Activated CD8-positive, alpha-beta T cell treated with anti-CD3 and anti-CD28 coated beads, Interleukin-2, amount 10 ng/mL, durations not matched to agents 7 days and 5 days (primary cell): ENCODE measurements at regions of chr5 and their contacts with region 1.

Region 1: DNA sequence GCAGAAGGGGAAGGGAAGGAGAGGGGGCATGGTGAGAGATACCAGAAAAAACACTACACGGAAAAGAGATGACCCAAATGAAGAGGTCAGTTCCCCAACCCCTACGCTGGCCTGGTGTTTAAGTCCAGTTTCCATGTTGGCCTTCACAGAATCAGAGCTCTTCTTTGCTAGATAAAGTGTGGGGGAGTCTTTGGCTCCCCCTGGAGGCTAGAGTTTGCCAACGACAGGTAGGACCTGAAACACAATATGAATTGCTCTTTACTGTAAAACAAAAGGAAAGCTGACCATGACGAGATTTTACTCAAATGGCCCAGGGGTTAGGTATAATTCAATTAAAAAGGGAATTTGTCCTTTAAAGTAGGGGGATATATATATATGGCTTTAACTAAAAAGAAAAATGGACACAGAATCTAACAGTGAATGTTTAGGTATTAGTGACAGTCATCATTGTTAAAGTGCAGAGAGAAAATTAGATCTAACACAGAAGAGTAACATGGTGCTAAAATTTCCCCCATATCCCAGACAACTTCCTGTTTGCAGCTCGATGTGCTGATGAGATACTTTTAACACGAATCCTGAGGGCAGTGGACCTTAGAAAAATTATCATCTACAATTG is 92.0 kb downstream of the SV2C start:
- DNase-seq: peak; percentile 74
- ATAC-seq: peak; percentile 68
- H3K4me3 Mint-ChIP-seq: no peak overlapping the region
- H3K27ac Mint-ChIP-seq: peak overlapping the region; percentile 84
- H3K4me1 Mint-ChIP-seq: peaks cover 22% of the 10 kb centered on the region
- H3K27me3 Mint-ChIP-seq: peaks cover 4% of the 10 kb centered on the region

Region 2: DNA sequence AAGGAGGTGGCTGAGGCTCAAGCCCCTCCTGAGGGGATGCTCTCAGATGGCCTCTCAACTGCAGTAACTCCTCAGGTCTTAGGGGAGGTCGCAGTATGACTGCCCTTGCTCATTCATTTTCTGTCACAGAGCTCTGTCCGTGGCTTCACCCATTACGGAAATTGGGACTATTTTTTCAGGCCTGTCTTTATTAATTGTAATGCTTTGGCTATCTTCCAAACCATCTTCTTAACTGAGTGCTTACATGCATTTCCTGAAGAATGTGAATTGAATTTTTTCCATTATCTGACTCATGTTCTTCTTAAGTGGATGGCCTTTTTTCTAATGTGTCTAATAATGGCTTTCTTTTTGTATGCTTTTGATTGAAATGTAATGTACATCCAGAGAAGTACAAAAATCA is 128.4 kb before region 1 on chr5:
- CTCF ChIA-PET with region 1: no interaction called
- POLR2A ChIA-PET with region 1: no interaction called
- DNase-seq: no peak
- ATAC-seq: no peak
- H3K4me3 Mint-ChIP-seq: no peak overlapping the region
- H3K27ac Mint-ChIP-seq: no peak overlapping the region
- H3K4me1 Mint-ChIP-seq: no peaks in the 10 kb centered on the region
- H3K27me3 Mint-ChIP-seq: peaks cover 6% of the 10 kb centered on the region

Region 3: DNA sequence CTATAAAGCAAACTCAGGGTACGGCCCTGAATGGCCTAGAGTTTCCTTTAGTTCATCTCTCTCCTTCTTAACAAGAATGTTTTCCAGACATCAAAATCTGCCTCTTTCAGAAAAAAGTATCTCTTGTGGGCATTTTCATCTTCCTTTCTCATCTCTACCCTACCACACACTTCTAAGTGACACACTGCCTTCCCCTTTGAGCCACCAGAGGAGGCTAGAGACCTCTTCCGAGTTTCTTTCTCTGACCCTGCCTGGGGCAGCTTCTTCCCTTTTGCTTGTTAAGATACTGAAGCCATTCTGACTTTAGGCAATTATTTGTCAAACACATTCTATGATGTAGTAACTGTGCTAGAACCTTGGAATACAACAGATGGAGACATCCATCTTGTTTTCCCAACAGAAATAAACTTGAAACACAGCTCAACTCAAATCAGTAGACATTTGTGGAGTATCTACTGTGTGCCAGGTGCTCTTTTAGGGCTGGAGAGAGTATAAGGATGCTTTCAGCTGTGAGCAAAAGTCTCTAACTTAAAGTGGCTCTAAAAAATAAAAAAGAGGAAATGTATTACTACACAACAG is 100.6 kb before region 1 on chr5:
- CTCF ChIA-PET with region 1: interaction called, 22 read pairs
- POLR2A ChIA-PET with region 1: no interaction called
- DNase-seq: peak; percentile 44
- ATAC-seq: peak; percentile 53
- H3K4me3 Mint-ChIP-seq: no peak overlapping the region
- H3K27ac Mint-ChIP-seq: no peak overlapping the region
- H3K4me1 Mint-ChIP-seq: peaks cover 5% of the 10 kb centered on the region
- H3K27me3 Mint-ChIP-seq: peaks cover 51% of the 10 kb centered on the region

Region 4: DNA sequence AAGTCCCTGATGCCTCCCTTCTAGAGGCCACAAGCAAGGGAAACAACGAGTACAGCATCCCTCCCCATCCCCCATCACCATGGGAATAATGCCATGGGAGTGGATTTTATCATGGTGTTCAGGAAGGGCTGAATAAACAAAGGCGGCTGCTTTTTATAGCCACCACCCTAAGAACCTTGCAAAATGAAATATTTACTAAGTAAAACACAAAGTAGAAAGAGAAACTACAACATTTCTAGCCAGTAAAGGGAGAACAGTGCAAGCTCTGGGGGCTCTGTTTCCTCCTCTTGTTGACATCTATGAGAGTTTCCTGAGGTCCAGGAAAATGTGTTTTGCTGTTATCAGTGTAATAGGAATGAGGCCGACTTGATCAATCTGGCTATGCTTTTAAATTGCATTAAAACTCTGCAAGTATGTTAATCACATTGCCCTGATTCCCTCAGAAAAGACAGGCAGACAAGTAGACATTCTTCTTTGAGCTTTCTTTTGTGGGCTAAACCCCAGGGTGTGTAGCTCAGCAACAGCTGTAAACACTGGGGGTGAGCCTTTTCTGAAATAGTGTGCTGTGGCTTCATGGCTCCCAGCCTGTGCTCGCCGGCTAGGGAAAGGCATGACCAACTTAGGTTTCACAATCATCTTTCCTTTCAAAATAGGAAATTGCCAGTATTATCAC is 60.8 kb before region 1 on chr5:
- CTCF ChIA-PET with region 1: no interaction called
- POLR2A ChIA-PET with region 1: no interaction called
- DNase-seq: no peak
- ATAC-seq: no peak
- H3K4me3 Mint-ChIP-seq: no peak overlapping the region
- H3K27ac Mint-ChIP-seq: no peak overlapping the region
- H3K4me1 Mint-ChIP-seq: peaks cover 2% of the 10 kb centered on the region
- H3K27me3 Mint-ChIP-seq: peaks cover 20% of the 10 kb centered on the region

Region 5: GRCh38 chr5:76145945-76146344 is 29.2 kb before region 1 on chr5:
- CTCF ChIA-PET with region 1: interaction called, 22 read pairs
- POLR2A ChIA-PET with region 1: no interaction called
- DNase-seq: peak; percentile 25
- ATAC-seq: no peak
- H3K4me3 Mint-ChIP-seq: no peak overlapping the region
- H3K27ac Mint-ChIP-seq: no peak overlapping the region
- H3K4me1 Mint-ChIP-seq: no peaks in the 10 kb centered on the region
- H3K27me3 Mint-ChIP-seq: peaks cover 3% of the 10 kb centered on the region

Region 6: GRCh38 chr5:76187386-76187785 is 12.2 kb after region 1 on chr5:
- CTCF ChIA-PET with region 1: interaction called, 21 read pairs
- POLR2A ChIA-PET with region 1: no interaction called
- DNase-seq: no peak
- ATAC-seq: no peak
- H3K4me3 Mint-ChIP-seq: no peak overlapping the region
- H3K27ac Mint-ChIP-seq: no peak overlapping the region
- H3K4me1 Mint-ChIP-seq: peaks cover 3% of the 10 kb centered on the region
- H3K27me3 Mint-ChIP-seq: peaks cover 7% of the 10 kb centered on the region

Region 7: GRCh38 chr5:76325876-76326491 is 150.8 kb after region 1 on chr5:
- CTCF ChIA-PET with region 1: interaction called, 10 read pairs
- POLR2A ChIA-PET with region 1: no interaction called
- DNase-seq: peak; percentile 77
- ATAC-seq: peak; percentile 94
- H3K4me3 Mint-ChIP-seq: peak overlapping the region; percentile 50
- H3K27ac Mint-ChIP-seq: peak overlapping the region; percentile 91
- H3K4me1 Mint-ChIP-seq: peaks cover 56% of the 10 kb centered on the region
- H3K27me3 Mint-ChIP-seq: peaks cover under 1% of the 10 kb centered on the region

Region 8: GRCh38 chr5:76544268-76544926 is 369.2 kb after region 1 on chr5:
- CTCF ChIA-PET with region 1: interaction called, 10 read pairs
- POLR2A ChIA-PET with region 1: no interaction called
- DNase-seq: peak; percentile 67
- ATAC-seq: peak; percentile 42
- H3K4me3 Mint-ChIP-seq: peak overlapping the region; percentile 61
- H3K27ac Mint-ChIP-seq: peak overlapping the region; percentile 91
- H3K4me1 Mint-ChIP-seq: peaks cover 62% of the 10 kb centered on the region
- H3K27me3 Mint-ChIP-seq: no peaks in the 10 kb centered on the region